ENCODE measurements at regions of chr12 and their contacts with region 1.

Region 1: DNA sequence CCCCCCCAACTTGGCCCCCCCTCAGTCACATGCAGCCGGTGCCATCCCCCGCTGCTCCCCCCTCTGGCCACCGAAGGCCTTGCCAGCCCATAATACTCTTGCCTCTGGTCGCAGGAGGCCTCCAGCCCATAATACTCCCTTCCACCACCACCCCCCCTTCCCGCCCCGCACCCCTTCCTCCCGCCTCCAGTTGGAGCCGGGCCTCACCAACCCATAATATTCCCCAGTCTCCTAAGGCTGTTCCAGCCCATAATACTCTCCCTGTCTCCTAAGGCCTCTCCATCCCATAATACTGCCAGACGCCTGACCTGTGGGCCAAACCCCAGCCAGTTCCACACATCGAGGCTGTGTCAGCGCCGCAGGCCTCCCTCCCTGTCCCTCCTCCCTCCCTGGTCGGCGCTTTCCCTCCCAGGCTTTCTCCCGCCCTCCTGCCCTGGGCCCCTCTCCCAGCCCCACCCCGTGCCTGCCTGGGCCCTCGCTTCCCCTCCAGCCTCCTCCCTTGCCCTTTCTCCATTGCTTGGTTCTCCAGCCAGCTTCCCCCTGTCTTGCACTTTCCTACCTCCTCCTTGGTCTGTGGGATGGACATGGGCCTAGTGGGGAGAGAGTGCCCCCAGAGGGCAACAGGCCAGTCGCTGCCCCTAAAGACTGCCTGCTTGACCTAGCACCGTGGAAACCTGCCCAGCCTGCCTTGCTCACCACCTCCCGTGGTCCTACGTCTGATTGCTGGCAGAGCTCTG is 6.8 kb upstream of the CHD4 start:
- DNase-seq: peak; percentile 98
- H3K4me3 ChIP-seq: peak overlapping the region in 1 of 4 donors; percentile 19
- H3K27ac ChIP-seq: peak overlapping the region; percentile 87 to 96 (median 94)
- H3K4me1 ChIP-seq: peaks cover 0 to 39% (median 36%) of the 10 kb centered on the region in 4 donors
- H3K27me3 ChIP-seq: no peaks in the 10 kb centered on the region
- CTCF ChIP-seq: no peak
- EP300 ChIP-seq: no peak
- POLR2A ChIP-seq: no peak

Region 2: DNA sequence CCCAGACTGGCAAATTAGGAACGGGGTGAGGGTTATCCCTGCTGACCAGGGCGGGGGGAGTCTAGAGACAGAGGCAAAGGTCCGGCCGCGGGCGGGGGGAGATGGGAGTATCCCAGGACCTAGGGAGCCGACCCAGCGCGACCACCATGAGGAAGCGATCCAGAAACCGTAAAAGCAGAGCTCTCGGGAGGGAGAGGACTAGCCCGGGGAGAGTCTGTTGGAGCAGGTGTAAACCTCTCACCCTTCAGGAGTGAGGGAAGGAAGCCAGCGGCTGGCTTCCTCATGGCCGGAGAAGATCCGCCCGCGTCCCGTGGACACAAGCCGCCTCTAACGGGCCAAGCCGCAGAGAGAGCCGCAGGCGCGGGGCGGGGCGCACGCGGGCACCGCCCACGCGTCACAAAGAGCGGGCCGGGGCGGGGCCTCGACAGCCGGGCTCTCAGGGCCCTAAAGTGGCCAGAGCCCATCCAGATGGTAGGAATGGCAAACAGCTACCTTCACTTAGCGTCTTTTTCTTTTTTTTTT is 33.2 kb after region 1 on chr12 and contains the start of gene ACRBP:
- intact Hi-C with region 1: loop called (anchors 2 kb)
- DNase-seq: peak; percentile 91
- H3K4me3 ChIP-seq: peak within 1 kb of the TSS; percentile 38 to 63 (median 54)
- H3K27ac ChIP-seq: peak within 1 kb of the TSS; percentile 50 to 74 (median 67)
- H3K4me1 ChIP-seq: peaks cover 0 to 14% (median 3%) of the 10 kb centered on the region in 4 donors
- H3K27me3 ChIP-seq: no peaks in the 10 kb centered on the region
- CTCF ChIP-seq: no peak
- EP300 ChIP-seq: no peak
- POLR2A ChIP-seq: no peak
- total RNA-seq, gene ACRBP: 1.2 to 3.9 (median 1.6) TPM

Region 3: DNA sequence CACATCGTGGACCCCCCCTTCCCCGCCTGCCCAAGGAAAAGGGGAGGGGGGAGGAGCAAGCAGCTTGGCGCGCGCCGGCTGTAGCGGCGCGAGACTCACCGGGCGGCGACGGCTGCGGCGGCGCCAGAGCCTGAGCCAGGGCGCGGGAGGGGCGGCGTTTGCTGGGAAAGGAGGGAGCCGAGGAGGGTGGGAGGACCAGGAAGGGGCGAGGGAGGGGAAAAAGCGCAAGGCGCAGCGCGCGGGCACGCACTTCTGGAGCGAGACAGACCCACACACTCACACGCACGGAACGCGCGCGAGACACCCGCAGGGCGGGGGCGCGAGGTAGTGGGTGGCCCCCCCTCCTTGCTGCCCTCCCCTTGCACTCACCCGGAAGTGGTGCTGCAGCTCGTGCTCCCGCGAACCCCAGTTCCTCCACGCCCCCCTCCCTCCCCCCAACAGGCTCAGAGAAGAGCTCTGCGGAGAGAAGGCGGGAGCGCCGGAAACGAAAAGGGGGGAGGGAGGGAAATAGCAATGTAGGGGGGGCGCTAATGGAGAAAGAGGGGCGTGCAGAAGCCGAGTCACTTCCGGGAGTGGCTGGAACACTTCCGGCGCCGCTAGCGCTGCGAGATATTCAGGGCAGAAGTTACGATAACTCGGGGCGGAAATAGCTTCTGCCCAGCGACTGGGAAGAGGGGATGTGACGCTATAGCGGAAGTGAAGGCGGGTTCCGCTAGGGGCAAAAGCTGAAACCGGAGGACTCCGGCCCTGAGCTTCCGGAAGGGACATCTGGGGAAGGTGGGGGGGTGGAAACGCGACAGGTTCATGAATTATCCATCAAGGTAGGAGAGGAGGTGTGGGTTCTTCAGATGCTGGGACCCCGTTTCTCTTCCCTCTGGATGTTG is 75.3 kb after region 1 on chr12 and contains the start of gene ZNF384:
- intact Hi-C with region 1: loop called (anchors 1 kb)
- DNase-seq: peak; percentile 99
- H3K4me3 ChIP-seq: peak within 1 kb of the TSS; percentile 94 to 98 (median 96)
- H3K27ac ChIP-seq: peak within 1 kb of the TSS; percentile 98 to 100 (median 100)
- H3K4me1 ChIP-seq: peaks cover 0 to 40% (median 36%) of the 10 kb centered on the region in 4 donors
- H3K27me3 ChIP-seq: no peaks in the 10 kb centered on the region
- CTCF ChIP-seq: peak in 2 of 4 experiments; percentile 22 to 35
- EP300 ChIP-seq: peak in 2 of 4 donors; percentile 8 to 40
- POLR2A ChIP-seq: peak; percentile 30 to 47
- total RNA-seq, gene ZNF384: 24.0 to 32.6 (median 28.7) TPM

Region 4: GRCh38 chr12:6764011-6764828 is 150.3 kb after region 1 on chr12:
- intact Hi-C with region 1: loop called (anchors 5 kb)
- DNase-seq: peak; percentile 99
- H3K4me3 ChIP-seq: peak overlapping the region in 3 of 4 donors; percentile 14 to 32 (median 24)
- H3K27ac ChIP-seq: peak overlapping the region; percentile 93 to 99 (median 96)
- H3K4me1 ChIP-seq: peaks cover 0 to 48% (median 44%) of the 10 kb centered on the region in 4 donors
- H3K27me3 ChIP-seq: no peaks in the 10 kb centered on the region
- CTCF ChIP-seq: no peak
- EP300 ChIP-seq: no peak
- POLR2A ChIP-seq: peak; percentile 30 to 32

Region 5: GRCh38 chr12:6825398-6826124 is 211.6 kb after region 1 on chr12:
- intact Hi-C with region 1: loop called (anchors 5 kb)
- DNase-seq: peak; percentile 94
- H3K4me3 ChIP-seq: peak overlapping the region in 1 of 4 donors; percentile 18
- H3K27ac ChIP-seq: no peak overlapping the region
- H3K4me1 ChIP-seq: peaks cover 3 to 66% (median 49%) of the 10 kb centered on the region in 4 donors
- H3K27me3 ChIP-seq: no peaks in the 10 kb centered on the region
- CTCF ChIP-seq: peak; percentile 84 to 95 (median 92)
- EP300 ChIP-seq: no peak
- POLR2A ChIP-seq: no peak

Measured in sigmoid colon (tissue), 7 donors.